ENCODE measurements at regions of chr7 and their contacts with region 1.

Region 1: GRCh38 chr7:105691733-105692564 is 110.7 kb upstream of the EFCAB10 start:
- DNase-seq: peak; percentile 40
- ATAC-seq: peak; percentile 75
- H3K4me3 Mint-ChIP-seq: peak overlapping the region; percentile 90
- H3K27ac Mint-ChIP-seq: peak overlapping the region; percentile 91
- H3K4me1 Mint-ChIP-seq: peaks cover 40% of the 10 kb centered on the region
- H3K27me3 Mint-ChIP-seq: no peaks in the 10 kb centered on the region
- CTCF ChIP-seq: no peak

Region 2: GRCh38 chr7:105678811-105679495 is 13.0 kb before region 1 on chr7:
- CTCF ChIA-PET with region 1: interaction called, 4 read pairs
- POLR2A ChIA-PET with region 1: interaction called, 21 read pairs
- intact Hi-C with region 1: loop called (anchors 1 kb)
- DNase-seq: peak; percentile 42
- ATAC-seq: peak; percentile 62
- H3K4me3 Mint-ChIP-seq: peak overlapping the region; percentile 94
- H3K27ac Mint-ChIP-seq: peak overlapping the region; percentile 89
- H3K4me1 Mint-ChIP-seq: peaks cover 57% of the 10 kb centered on the region
- H3K27me3 Mint-ChIP-seq: no peaks in the 10 kb centered on the region
- CTCF ChIP-seq: no peak

Region 3: DNA sequence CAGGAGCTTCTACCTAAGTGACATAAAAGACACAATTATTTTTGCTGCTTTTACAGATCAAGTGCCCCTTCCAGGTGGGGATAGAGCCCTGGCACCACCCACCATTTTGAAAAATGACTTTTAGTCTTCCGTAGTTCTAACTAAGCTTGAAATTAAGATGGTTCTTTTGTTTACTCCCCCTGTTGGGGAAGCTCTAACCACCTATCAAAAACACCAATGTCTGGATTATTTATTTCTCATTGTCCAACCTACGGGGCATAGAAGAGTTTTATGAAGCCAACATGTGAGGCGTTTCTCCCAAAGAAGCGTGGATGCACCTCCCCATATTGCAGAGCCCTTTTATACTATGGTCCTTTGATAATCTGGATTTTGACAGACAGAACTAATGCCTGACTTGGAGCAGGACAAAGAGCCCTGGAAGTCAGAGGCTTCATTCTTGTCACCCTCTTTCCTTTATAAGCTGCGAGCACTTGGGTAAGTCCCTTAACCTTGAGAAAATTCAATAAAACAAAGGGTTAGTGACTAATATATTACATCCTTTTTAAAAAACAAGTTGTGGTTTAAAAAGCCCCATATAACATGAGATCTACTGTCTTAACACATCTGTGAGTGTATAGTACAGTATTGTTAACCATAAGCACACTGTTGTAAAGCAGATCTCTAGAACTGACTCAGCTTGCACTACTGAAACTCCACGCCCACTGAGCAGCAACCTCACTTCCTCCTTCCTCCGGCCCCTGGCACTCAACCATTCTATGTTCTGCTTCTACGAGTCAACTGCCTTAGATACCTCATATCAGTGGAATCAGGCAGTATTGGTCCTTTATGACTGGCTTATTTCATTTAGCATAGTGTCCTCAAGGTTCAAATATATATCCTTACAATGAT is 117.0 kb after region 1 on chr7:
- CTCF ChIA-PET with region 1: no interaction called
- POLR2A ChIA-PET with region 1: interaction called, 5 read pairs
- intact Hi-C with region 1: loop called (anchors 1 kb)
- DNase-seq: peak; percentile 60
- ATAC-seq: peak; percentile 95
- H3K4me3 Mint-ChIP-seq: peak overlapping the region; percentile 66
- H3K27ac Mint-ChIP-seq: peak overlapping the region; percentile 87
- H3K4me1 Mint-ChIP-seq: peaks cover 46% of the 10 kb centered on the region
- H3K27me3 Mint-ChIP-seq: no peaks in the 10 kb centered on the region
- CTCF ChIP-seq: no peak

Region 4: GRCh38 chr7:106009403-106010226 is 317.7 kb after region 1 on chr7:
- CTCF ChIA-PET with region 1: interaction called, 7 read pairs
- POLR2A ChIA-PET with region 1: no interaction called
- intact Hi-C with region 1: loop called (anchors 1 kb)
- DNase-seq: peak; percentile 73
- ATAC-seq: peak; percentile 98
- H3K4me3 Mint-ChIP-seq: no peak overlapping the region
- H3K27ac Mint-ChIP-seq: no peak overlapping the region
- H3K4me1 Mint-ChIP-seq: peaks cover 22% of the 10 kb centered on the region
- H3K27me3 Mint-ChIP-seq: peaks cover 4% of the 10 kb centered on the region
- CTCF ChIP-seq: no peak